ENCODE measurements at regions of chr5 and their contacts with region 1.

Region 1: GRCh38 chr5:102114525-102115069 is 181.5 kb downstream of the SLCO4C1 start:
- DNase-seq: no peak
- H3K4me3 ChIP-seq: no peak overlapping the region
- H3K27ac ChIP-seq: no peak overlapping the region
- H3K4me1 ChIP-seq: no peaks in the 10 kb centered on the region
- H3K27me3 ChIP-seq: no peaks in the 10 kb centered on the region
- CTCF ChIP-seq: no peak
- POLR2A ChIP-seq: no peak

Region 2: DNA sequence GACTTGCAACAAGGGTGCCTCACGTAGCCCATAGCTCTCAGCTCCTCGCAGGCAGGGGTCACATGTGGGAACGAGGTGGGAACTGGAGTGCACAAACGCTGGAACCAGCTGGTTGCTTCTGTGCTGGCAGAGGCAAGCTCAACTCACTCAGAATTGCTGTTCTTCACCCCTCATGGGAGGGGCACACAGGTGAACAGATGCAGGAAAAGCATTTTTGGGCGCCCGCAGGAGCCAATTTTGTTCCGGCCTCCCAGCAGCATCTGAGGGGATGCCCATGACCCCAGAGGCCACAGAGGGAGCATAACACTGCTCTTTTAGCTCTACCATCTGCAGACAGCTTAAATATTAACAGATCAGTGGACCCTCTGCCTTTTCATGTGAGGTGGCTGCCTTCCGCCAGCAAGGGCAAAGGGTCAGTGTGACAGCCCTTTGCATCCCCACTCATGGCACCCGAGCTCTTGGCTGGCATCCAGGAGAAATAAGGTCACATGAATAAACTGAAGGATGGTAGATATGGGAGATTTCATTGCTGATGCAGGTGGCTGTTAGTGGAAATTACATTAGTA is 14.7 kb before region 1 on chr5:
- intact Hi-C with region 1: loop called (anchors 1 kb)
- DNase-seq: no peak
- H3K4me3 ChIP-seq: no peak overlapping the region
- H3K27ac ChIP-seq: no peak overlapping the region
- H3K4me1 ChIP-seq: no peaks in the 10 kb centered on the region
- H3K27me3 ChIP-seq: no peaks in the 10 kb centered on the region
- CTCF ChIP-seq: no peak
- POLR2A ChIP-seq: no peak

Measured in breast epithelium (tissue), 4 donors.